A673 (cell line): ENCODE measurements at regions of chr10 and their contacts with region 1.

Region 1: DNA sequence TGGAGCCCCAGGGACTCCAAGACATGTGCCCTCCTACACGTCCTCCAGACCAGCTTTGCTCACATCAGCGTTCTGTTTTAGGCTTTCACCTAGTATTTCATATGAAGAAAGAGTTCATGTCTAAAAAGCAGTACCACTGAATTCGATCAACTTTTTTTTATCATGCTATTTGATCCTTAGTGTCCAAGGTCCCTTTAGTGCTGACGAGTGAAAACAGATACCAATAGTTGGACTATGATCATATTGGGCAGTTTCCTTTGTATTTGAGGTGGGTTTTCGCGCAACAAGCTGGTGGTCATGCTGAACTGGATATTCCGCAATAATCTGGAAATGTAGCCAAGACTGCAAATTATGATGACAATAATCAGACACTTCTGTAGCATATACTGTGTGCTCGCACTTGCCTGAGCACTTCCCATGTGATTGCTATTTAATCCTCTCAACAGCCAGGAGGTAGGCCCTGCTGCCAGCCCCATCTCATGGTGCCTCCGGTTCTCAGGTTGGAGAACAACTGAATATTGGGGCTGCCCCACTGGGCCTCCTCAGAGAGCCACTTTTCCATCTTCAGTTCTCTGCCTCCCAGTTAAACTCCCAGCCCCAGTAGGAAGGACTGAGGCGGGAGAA is 65.9 kb downstream of the RBM20 start:
- DNase-seq: no peak
- H3K4me3 ChIP-seq: no peak overlapping the region
- H3K27ac ChIP-seq: no peak overlapping the region
- H3K4me1 ChIP-seq: no peaks in the 10 kb centered on the region
- H3K27me3 ChIP-seq: no peaks in the 10 kb centered on the region
- CTCF ChIP-seq: no peak

Region 2: GRCh38 chr10:110893559-110894179 is 183.6 kb after region 1 on chr10:
- CTCF ChIA-PET with region 1: no interaction called
- POLR2A ChIA-PET with region 1: interaction called, 45 read pairs
- intact Hi-C with region 1: no loop called
- DNase-seq: peak; percentile 76
- H3K4me3 ChIP-seq: no peak overlapping the region
- H3K27ac ChIP-seq: no peak overlapping the region
- H3K4me1 ChIP-seq: peaks cover 4% of the 10 kb centered on the region
- H3K27me3 ChIP-seq: no peaks in the 10 kb centered on the region
- CTCF ChIP-seq: peak; percentile 67